Adrenal gland (tissue), 19 donors: ENCODE measurements at regions of chr6 and their contacts with region 1.

Region 1: GRCh38 chr6:137271245-137272183 is 52.3 kb upstream of the IFNGR1 start:
- DNase-seq: no peak
- H3K4me3 ChIP-seq: no peak overlapping the region
- H3K27ac ChIP-seq: no peak overlapping the region
- H3K4me1 ChIP-seq: no peaks in the 10 kb centered on the region
- H3K27me3 ChIP-seq: no peaks in the 10 kb centered on the region
- CTCF ChIP-seq: peak; percentile 74 to 92 (median 86)
- POLR2A ChIP-seq: no peak

Region 2: DNA sequence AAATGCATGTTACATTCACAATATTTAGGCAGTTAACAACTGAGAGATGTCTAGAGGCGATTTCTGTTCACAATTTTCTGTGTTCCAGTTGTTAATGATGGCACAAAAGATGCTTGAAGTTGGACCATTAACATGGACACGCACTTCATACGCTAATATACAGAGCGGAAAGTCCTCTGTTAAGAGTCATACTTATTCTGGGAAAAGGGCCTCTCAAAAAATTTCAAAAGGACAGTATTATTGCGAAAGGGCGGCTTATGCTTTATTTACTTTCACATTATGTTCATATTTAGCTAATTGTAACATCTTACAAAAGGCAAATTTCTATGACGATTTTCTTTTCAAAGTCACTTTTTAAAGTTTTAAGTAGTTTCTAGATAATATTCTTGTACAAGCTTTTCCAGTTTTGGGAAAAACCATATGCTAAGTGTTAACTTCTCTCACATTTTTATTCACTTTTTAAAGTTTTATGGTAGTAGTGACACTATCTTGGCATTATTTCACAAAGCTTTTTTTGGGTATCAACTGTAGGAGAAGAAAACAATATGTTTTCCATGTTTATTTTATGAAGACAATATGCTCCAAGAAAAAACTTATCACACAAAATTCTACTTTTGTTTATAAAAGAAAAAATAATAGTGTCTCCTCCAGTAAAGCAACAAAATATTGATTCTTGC is 783.6 kb before region 1 on chr6:
- intact Hi-C with region 1: no loop called
- DNase-seq: no peak
- H3K4me3 ChIP-seq: no peak overlapping the region
- H3K27ac ChIP-seq: no peak overlapping the region
- H3K4me1 ChIP-seq: no peaks in the 10 kb centered on the region
- H3K27me3 ChIP-seq: no peaks in the 10 kb centered on the region
- CTCF ChIP-seq: no peak
- POLR2A ChIP-seq: no peak

Region 3: GRCh38 chr6:137202078-137202477 is 69.4 kb before region 1 on chr6:
- intact Hi-C with region 1: no loop called
- DNase-seq: no peak
- H3K4me3 ChIP-seq: no peak overlapping the region
- H3K27ac ChIP-seq: no peak overlapping the region
- H3K4me1 ChIP-seq: peaks cover 9 to 10% of the 10 kb centered on the region in 2 donors
- H3K27me3 ChIP-seq: no peaks in the 10 kb centered on the region
- CTCF ChIP-seq: no peak
- POLR2A ChIP-seq: no peak

Region 4: DNA sequence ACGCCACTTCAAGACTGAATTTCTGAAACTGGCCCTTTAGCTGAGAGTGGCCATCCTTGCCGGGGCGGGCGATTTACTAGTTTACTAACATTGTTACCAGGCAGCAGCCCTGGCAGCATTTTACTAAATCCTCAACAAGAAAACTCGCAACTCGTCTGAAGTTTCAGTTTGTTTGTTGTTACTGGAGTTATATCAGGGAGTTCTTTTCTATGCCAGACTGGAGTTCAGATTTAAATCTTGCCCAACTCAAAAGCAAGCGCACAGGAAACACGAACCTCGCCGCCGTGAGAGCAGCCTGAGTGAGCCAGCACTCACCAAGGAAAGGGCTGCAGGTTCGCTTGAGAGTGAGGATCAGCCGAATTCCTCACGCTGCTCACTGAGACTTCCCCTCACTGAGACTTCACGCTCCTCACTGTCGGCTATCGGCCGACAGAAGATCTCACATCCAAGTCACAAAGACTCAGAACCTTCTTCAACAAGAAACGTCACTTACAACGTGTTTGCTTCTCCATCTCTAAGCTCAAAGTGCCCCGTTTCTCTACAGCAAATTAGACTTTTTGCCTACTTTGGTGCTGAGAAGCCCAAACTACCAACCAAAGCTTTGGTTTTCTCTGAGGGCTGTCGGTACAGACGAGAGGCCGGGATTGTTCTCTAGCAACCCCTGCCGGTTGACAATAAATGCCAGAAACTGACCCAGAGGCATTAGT is 143.8 kb after region 1 on chr6:
- intact Hi-C with region 1: loop called in 1 of 2 experiments (anchors 10 kb)
- DNase-seq: peak; percentile 49 to 77 (median 59)
- H3K4me3 ChIP-seq: peak overlapping the region in 2 of 4 donors; percentile 14 to 47
- H3K27ac ChIP-seq: no peak overlapping the region
- H3K4me1 ChIP-seq: peaks cover 0 to 6% of the 10 kb centered on the region in 2 donors
- H3K27me3 ChIP-seq: peaks cover 7% of the 10 kb centered on the region
- CTCF ChIP-seq: peak; percentile 48 to 66 (median 60)
- POLR2A ChIP-seq: no peak